SK-N-SH (cell line): ENCODE measurements at regions of chr2 and their contacts with region 1.

Region 1: DNA sequence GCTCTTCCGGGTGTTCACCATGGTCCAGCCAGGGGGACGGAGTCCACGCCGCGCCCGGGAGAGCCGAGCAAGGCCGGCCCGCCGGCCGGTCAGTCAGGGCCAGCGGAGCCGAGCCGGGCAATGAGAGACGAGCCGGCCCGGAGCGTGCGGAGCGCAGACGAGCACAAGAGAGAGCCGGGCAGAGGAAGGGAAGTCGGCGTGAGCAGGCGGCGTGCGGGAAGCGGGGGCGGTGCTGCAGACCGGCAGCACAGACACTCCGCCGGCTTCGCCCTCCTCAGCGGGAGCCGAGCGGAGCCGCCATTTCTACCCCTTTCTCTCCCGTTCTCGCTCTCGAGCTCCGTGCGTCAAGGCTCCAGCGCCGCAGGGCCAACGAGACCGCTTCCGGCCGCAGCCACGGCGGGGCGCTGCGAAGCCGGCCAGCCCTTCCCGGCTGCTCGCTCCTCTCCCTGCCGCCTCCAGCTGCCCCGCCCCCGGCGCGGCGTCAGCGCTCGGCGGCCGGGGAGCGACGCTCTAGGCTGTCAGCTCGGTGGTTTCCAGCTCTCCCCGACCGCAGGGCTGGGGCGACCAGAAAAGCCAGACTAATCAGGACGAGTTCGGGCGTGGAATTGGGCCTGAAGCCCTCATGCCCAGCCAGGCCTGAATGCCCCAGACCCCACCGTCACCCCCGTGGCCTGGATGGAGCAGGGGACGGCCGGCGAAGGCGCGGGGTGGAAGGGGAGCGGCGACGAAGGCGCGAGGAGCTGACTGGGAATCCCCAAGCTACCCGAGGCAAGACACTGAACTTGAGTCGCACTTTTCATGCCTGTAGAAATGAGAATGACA is at the start of gene ATAD2B:
- DNase-seq: peak; percentile 99
- H3K4me3 ChIP-seq: peak within 1 kb of the TSS; percentile 84 to 97
- H3K27ac ChIP-seq: peak within 1 kb of the TSS; percentile 94 to 95
- H3K4me1 ChIP-seq: peaks cover 8 to 13% of the 10 kb centered on the region in 2 experiments; a peak in 3 of 4 replicates
- H3K27me3 ChIP-seq: no peaks in the 10 kb centered on the region
- CTCF ChIP-seq: peak; percentile 87
- EP300 ChIP-seq: peak; percentile 23 to 58; a peak in 3 of 4 replicates
- RAD21 ChIP-seq: peak; percentile 84
- polyA plus RNA-seq, gene ATAD2B: 1.3 and 1.7 TPM in 2 replicates

Region 2: DNA sequence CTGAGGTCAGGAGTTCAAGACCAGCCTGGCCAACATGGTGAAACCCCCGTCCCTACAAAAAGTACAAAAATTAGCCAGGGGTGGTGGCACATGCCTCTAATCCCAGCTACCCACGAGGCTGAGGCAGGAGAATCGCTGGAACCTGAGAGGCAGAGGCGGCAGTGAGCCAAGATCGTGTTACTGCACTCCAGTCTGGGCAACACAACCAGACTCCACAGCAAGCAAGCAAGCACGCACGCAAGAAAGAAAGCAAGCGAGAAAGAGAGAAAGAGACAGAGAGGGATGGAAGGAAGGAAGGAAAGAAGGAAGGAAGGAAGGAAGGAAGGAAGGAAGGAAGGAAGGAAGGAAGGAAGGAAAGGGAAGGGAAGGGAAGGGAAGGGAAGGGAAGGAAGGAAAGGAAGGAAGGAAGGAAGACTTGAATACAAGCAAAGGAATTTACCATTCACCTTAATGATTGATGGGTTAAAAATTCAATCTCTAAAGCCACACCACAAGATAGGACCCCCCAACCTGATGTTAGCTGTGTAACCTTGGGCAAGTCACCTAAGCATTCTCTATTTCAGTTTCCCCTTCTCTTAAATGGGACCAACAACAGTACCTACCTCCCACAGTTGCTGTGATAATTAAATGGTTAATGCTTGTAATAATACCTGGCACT is 181.8 kb before region 1 on chr2:
- CTCF ChIA-PET with region 1: no interaction called
- POLR2A ChIA-PET with region 1: no interaction called
- DNase-seq: no peak
- H3K4me3 ChIP-seq: no peak overlapping the region
- H3K27ac ChIP-seq: no peak overlapping the region
- H3K4me1 ChIP-seq: peaks cover 0 to 17% of the 10 kb centered on the region in 2 experiments; a peak in 3 of 4 replicates
- H3K27me3 ChIP-seq: no peaks in the 10 kb centered on the region
- CTCF ChIP-seq: no peak
- EP300 ChIP-seq: no peak
- RAD21 ChIP-seq: no peak

Region 3: DNA sequence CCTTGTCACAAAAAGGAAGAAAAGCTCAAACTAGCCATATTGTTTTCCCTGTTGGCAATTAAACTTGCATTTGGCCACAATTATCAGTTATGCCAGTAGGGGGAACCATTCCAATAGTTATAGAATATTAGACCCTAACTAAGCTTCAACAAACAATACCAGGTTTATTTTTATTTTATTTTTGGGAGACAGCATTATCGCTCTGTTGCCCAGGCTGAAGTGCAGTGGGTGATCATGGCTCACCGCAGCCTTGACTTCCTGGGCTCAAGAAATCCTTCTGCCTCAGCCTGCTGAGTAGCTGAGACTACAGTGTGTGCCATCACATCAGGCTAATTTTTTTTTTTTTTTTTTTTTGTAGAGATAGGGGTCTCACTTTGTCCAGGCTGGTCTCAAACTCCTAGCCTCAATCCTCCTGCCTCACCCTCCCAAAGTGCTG is 102.2 kb before region 1 on chr2:
- CTCF ChIA-PET with region 1: interaction called, 72 read pairs
- POLR2A ChIA-PET with region 1: interaction called, 21 read pairs
- DNase-seq: peak; percentile 65
- H3K4me3 ChIP-seq: no peak overlapping the region
- H3K27ac ChIP-seq: no peak overlapping the region
- H3K4me1 ChIP-seq: no peaks in the 10 kb centered on the region; a peak in 1 of 4 replicates
- H3K27me3 ChIP-seq: no peaks in the 10 kb centered on the region
- CTCF ChIP-seq: peak; percentile 94
- EP300 ChIP-seq: no peak
- RAD21 ChIP-seq: peak; percentile 85

Region 4: GRCh38 chr2:23900927-23901322 is 26.0 kb before region 1 on chr2:
- CTCF ChIA-PET with region 1: interaction called, 16 read pairs
- POLR2A ChIA-PET with region 1: no interaction called
- DNase-seq: no peak
- H3K4me3 ChIP-seq: no peak overlapping the region
- H3K27ac ChIP-seq: peak overlapping the region in 1 of 2 experiments; percentile 52; a peak in 2 of 4 replicates
- H3K4me1 ChIP-seq: peaks cover 2 to 22% of the 10 kb centered on the region in 2 experiments; a peak in 3 of 4 replicates
- H3K27me3 ChIP-seq: no peaks in the 10 kb centered on the region
- CTCF ChIP-seq: no peak
- EP300 ChIP-seq: no peak
- RAD21 ChIP-seq: no peak

Region 5: GRCh38 chr2:23939987-23940717 is 13.2 kb after region 1 on chr2 and contains the start of gene UBXN2A:
- CTCF ChIA-PET with region 1: interaction called, 42 read pairs
- POLR2A ChIA-PET with region 1: interaction called, 53 read pairs
- DNase-seq: peak; percentile 97
- H3K4me3 ChIP-seq: peak within 1 kb of the TSS; percentile 73 to 91
- H3K27ac ChIP-seq: peak within 1 kb of the TSS; percentile 63 to 88
- H3K4me1 ChIP-seq: peaks cover 7 to 14% of the 10 kb centered on the region in 2 experiments; a peak in 3 of 4 replicates
- H3K27me3 ChIP-seq: no peaks in the 10 kb centered on the region
- CTCF ChIP-seq: no peak
- EP300 ChIP-seq: no peak
- RAD21 ChIP-seq: no peak
- polyA plus RNA-seq, gene UBXN2A: 5.8 and 7.1 TPM in 2 replicates

Region 6: DNA sequence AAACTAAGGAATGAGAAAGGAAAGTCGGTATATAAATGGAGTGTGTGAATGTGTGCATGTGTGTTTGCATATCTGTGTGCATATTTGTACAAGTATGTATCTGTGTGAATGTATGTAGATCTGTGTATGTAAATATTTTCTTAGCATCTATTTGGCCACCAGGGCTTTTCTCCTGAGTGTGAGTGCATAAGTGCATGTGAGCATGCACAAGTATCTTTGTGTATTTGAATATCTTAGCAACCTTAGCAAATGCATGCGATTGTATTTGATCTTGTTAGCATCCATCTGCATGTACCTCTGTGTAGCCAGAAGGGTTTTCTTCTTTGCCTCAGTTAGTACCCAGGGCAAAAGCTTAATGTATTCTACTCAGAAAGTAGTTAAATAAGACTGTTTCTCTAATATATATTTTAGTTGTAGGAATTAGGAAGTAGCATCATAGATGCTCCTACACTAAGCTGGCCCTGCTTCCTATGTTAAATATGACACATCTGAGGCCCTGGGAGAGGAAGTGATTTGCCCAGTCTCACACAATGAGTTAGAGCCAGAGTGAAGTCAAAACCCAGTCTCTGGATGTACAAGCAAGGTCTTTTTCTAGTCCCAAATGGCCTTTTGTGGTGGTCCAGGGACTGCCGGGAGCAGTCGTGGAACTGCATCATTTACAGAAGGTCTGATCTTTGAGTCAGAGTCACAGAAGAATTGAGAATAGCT is 131.8 kb after region 1 on chr2:
- CTCF ChIA-PET with region 1: interaction called, 35 read pairs
- POLR2A ChIA-PET with region 1: no interaction called
- DNase-seq: no peak
- H3K4me3 ChIP-seq: no peak overlapping the region
- H3K27ac ChIP-seq: no peak overlapping the region
- H3K4me1 ChIP-seq: peaks cover 0 to 9% of the 10 kb centered on the region in 2 experiments; a peak in 1 of 4 replicates
- H3K27me3 ChIP-seq: no peaks in the 10 kb centered on the region
- CTCF ChIP-seq: peak; percentile 8; the same call in 1 of the 2 replicates
- EP300 ChIP-seq: no peak
- RAD21 ChIP-seq: no peak